HCT116 (cell line): ENCODE measurements at regions of chr2 and their contacts with region 1.

Region 1: DNA sequence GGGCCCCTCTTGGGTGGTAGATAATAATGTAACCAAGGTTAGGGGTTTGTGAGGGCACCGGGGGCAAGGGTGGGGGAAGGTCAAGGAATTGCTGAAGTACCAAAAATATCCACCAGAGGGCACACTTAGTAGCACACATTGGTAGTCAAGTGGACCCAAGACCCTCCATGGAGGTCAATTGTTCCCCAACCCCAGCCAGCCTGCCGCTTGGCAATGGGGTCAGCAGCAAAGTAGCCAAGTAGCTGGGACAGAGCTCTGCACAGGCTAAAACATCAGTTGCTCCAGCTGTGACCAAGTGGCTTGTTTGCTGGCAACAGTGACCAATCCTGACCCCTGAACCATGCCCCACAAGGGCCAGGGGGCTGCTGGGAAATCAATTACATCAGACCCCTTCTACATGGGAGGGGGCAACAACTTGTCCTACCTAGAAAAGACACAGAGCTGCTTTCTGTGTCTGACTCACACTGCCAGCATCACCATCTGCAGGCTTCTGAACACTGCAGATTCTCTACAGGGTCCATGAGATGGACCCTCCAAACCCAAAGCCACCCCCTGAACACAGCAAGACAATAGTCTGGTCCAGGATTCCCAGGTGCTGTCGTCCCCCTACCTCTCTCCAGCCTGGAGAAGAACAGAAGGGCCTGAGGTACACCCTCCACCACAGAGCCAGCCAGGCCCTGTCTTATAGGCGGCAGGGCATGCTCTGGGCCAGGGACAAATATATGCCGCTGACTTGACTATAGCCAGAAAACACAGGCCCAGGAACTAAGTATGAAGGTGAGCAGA is 76.0 kb downstream of the EMX1 start:
- DNase-seq: peak; percentile 22
- ATAC-seq: peak; percentile 79; the same call in 1 of the 2 replicates
- H3K4me3 ChIP-seq: no peak overlapping the region
- H3K27ac ChIP-seq: no peak overlapping the region
- H3K4me1 ChIP-seq: no peaks in the 10 kb centered on the region
- H3K27me3 ChIP-seq: no peaks in the 10 kb centered on the region
- CTCF ChIP-seq: peak; percentile 65 to 81 (median 66)
- POLR2A ChIP-seq: no peak
- RAD21 ChIP-seq: peak; percentile 74

Region 2: GRCh38 chr2:72924353-72925240 is 68.7 kb before region 1 on chr2:
- CTCF ChIA-PET with region 1: no interaction called
- POLR2A ChIA-PET with region 1: no interaction called
- RAD21 ChIA-PET with region 1: no interaction called
- intact Hi-C with region 1: no loop called
- DNase-seq: no peak
- ATAC-seq: no peak
- H3K4me3 ChIP-seq: no peak overlapping the region
- H3K27ac ChIP-seq: no peak overlapping the region
- H3K4me1 ChIP-seq: no peaks in the 10 kb centered on the region
- H3K27me3 ChIP-seq: no peaks in the 10 kb centered on the region
- CTCF ChIP-seq: no peak
- POLR2A ChIP-seq: no peak
- RAD21 ChIP-seq: no peak

Region 3: DNA sequence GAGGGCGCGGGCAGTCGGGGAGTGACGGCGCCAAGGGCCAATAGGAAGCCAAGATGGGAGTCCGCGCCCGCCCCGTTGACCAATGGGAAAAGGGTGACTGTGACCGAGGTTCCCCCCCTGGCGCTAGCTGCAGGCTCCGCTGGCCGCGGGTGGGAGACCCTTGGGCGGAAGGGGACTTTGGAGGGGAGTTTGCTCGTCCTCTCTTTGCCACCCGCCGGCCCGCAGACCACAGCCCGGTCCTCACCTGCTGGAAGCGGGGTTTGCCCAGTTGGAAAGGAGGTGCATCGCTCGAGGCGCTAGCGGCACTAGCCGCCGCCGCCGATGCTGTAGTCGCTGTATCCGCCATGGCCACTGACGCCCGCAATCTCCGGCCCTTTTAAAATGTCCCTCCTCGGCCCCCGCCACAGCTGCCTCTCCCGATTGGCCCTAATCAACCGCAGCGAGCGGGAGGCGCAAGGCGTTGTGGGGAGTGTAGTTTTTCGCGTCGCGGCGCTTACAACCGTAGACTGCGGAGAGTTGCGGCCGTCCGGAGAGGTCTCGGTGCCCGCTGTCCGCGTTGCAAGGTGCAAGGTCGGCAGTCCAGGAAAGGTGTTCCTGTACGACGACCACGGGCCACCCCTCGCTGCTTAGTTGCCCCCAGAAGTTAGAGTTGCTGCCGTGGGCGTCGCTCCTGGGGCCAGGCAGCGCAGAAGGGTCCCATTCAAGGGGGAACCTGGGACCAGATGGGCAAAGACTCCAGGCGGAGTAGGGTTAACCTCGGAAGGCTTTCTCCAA is 78.2 kb after region 1 on chr2 and contains the start of gene SFXN5:
- CTCF ChIA-PET with region 1: no interaction called
- POLR2A ChIA-PET with region 1: no interaction called
- RAD21 ChIA-PET with region 1: no interaction called
- intact Hi-C with region 1: loop called (anchors 5 kb)
- DNase-seq: peak; percentile 88
- ATAC-seq: peak; percentile 94
- H3K4me3 ChIP-seq: peak within 1 kb of the TSS; percentile 80 to 81
- H3K27ac ChIP-seq: peak within 1 kb of the TSS; percentile 74
- H3K4me1 ChIP-seq: peaks cover 5 to 19% of the 10 kb centered on the region in 2 experiments; a peak in 3 of 4 replicates
- H3K27me3 ChIP-seq: no peaks in the 10 kb centered on the region
- CTCF ChIP-seq: 0 out of 6 replicates have a peak, but pooled peaks of 1 of the 3 experiments have one; percentile 2
- POLR2A ChIP-seq: peak; percentile 16
- RAD21 ChIP-seq: no peak
- total RNA-seq, gene SFXN5: 10.0 TPM

Region 4: DNA sequence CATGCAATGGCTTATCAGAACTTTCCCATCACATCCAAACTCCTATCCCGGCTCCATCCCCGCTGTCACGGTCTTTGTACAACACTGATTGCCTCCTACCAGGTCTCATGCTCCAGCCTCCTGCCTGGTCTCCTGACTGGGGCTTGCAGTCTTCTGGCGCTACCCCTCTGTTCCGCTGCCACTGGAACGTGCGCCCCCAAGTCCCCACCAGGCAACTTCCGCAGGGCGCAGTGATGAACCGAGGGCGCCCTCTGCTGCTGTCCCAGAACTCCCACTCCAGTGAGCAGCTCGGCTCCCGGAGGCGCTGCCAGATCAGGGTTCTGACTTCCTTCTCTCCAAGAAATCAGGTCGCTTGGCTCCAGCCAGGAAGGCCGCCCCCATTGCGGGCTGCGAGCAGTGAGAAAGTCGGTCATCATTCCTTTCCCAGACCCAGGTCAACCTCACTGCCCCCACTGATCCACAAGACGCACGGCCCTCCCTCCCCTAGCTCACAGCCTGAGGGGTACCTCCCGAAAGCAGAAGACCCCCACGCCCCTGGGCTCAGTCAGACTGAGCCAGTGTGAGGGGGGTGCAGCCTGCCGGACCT is 163.3 kb after region 1 on chr2:
- CTCF ChIA-PET with region 1: interaction called, 10 read pairs
- POLR2A ChIA-PET with region 1: no interaction called
- RAD21 ChIA-PET with region 1: no interaction called
- intact Hi-C with region 1: no loop called
- DNase-seq: peak; percentile 31
- ATAC-seq: peak; percentile 98
- H3K4me3 ChIP-seq: no peak overlapping the region
- H3K27ac ChIP-seq: no peak overlapping the region
- H3K4me1 ChIP-seq: peaks cover 0 to 5% of the 10 kb centered on the region in 2 experiments; a peak in 1 of 4 replicates
- H3K27me3 ChIP-seq: no peaks in the 10 kb centered on the region
- CTCF ChIP-seq: peak; percentile 80 to 98 (median 83)
- POLR2A ChIP-seq: no peak
- RAD21 ChIP-seq: peak; percentile 99

Region 5: GRCh38 chr2:73163483-73164367 is 170.4 kb after region 1 on chr2:
- CTCF ChIA-PET with region 1: interaction called, 3 read pairs
- POLR2A ChIA-PET with region 1: no interaction called
- RAD21 ChIA-PET with region 1: no interaction called
- intact Hi-C with region 1: loop called (anchors 2 kb)
- DNase-seq: peak; percentile 69
- ATAC-seq: peak; percentile 99
- H3K4me3 ChIP-seq: no peak overlapping the region
- H3K27ac ChIP-seq: no peak overlapping the region
- H3K4me1 ChIP-seq: no peaks in the 10 kb centered on the region; a peak in 2 of 4 replicates
- H3K27me3 ChIP-seq: no peaks in the 10 kb centered on the region
- CTCF ChIP-seq: peak; percentile 83 to 87 (median 87); a peak in 5 of 6 replicates
- POLR2A ChIP-seq: no peak
- RAD21 ChIP-seq: peak; percentile 86